Aorta (tissue), 5 donors: ENCODE measurements at regions of chr2 and their contacts with region 1.

Region 1: GRCh38 chr2:145108361-145108778 is 588.5 kb upstream of the ZEB2 start:
- DNase-seq: no peak
- ATAC-seq: no peak
- H3K4me3 ChIP-seq: no peak overlapping the region
- H3K27ac ChIP-seq: no peak overlapping the region
- H3K4me1 ChIP-seq: no peaks in the 10 kb centered on the region
- H3K27me3 ChIP-seq: no peaks in the 10 kb centered on the region

Region 2: GRCh38 chr2:145007093-145007959 is 101.0 kb before region 1 on chr2:
- intact Hi-C with region 1: loop called in 1 of 2 experiments (anchors 5 kb)
- DNase-seq: peak; percentile 77 to 81
- ATAC-seq: peak; percentile 79
- H3K4me3 ChIP-seq: no peak overlapping the region
- H3K27ac ChIP-seq: peak overlapping the region; percentile 80 to 95
- H3K4me1 ChIP-seq: peaks cover under 1 to 6% of the 10 kb centered on the region in 2 donors
- H3K27me3 ChIP-seq: no peaks in the 10 kb centered on the region

Region 3: GRCh38 chr2:145169285-145169684 is 60.9 kb after region 1 on chr2:
- intact Hi-C with region 1: no loop called
- DNase-seq: no peak
- ATAC-seq: no peak
- H3K4me3 ChIP-seq: no peak overlapping the region
- H3K27ac ChIP-seq: no peak overlapping the region
- H3K4me1 ChIP-seq: no peaks in the 10 kb centered on the region
- H3K27me3 ChIP-seq: no peaks in the 10 kb centered on the region